Naive thymus-derived CD4-positive, alpha-beta T cell (primary cell): ENCODE measurements at regions of chr16 and their contacts with region 1.

Region 1: GRCh38 chr16:66728117-66728787 is 23.2 kb downstream of the DYNC1LI2 start:
- DNase-seq: peak in 6 of 9 donors; percentile 26 to 56 (median 44)
- ATAC-seq: peak; percentile 92
- H3K4me3 ChIP-seq: no peak overlapping the region
- H3K4me3 Mint-ChIP-seq: no peak overlapping the region
- H3K27ac ChIP-seq: no peak overlapping the region
- H3K27ac Mint-ChIP-seq: peak overlapping the region in 6 of 9 donors; percentile 11 to 86 (median 72)
- H3K4me1 ChIP-seq: no peaks in the 10 kb centered on the region
- H3K4me1 Mint-ChIP-seq: peaks cover 5 to 9% (median 5%) of the 10 kb centered on the region in 7 donors
- H3K27me3 ChIP-seq: no peaks in the 10 kb centered on the region
- H3K27me3 Mint-ChIP-seq: no peaks in the 10 kb centered on the region

Region 2: GRCh38 chr16:66382171-66382965 is 345.9 kb before region 1 on chr16:
- CTCF ChIA-PET with region 1: no interaction called
- POLR2A ChIA-PET with region 1: no interaction called
- intact Hi-C with region 1: no loop called
- DNase-seq: no peak
- ATAC-seq: no peak
- H3K4me3 ChIP-seq: no peak overlapping the region
- H3K4me3 Mint-ChIP-seq: no peak overlapping the region
- H3K27ac ChIP-seq: no peak overlapping the region
- H3K27ac Mint-ChIP-seq: no peak overlapping the region
- H3K4me1 ChIP-seq: no peaks in the 10 kb centered on the region
- H3K4me1 Mint-ChIP-seq: peaks cover 0 to 4% (median 0%) of the 10 kb centered on the region in 7 donors
- H3K27me3 ChIP-seq: no peaks in the 10 kb centered on the region
- H3K27me3 Mint-ChIP-seq: peaks cover 0 to 11% (median 0%) of the 10 kb centered on the region in 5 donors

Region 3: GRCh38 chr16:66562407-66562806 is 165.8 kb before region 1 on chr16:
- CTCF ChIA-PET with region 1: interaction called, 3 read pairs
- POLR2A ChIA-PET with region 1: no interaction called
- intact Hi-C with region 1: loop called in 1 of 2 experiments (anchors 5 kb)
- DNase-seq: peak in 4 of 9 donors; percentile 21 to 53 (median 34)
- ATAC-seq: peak; percentile 60
- H3K4me3 ChIP-seq: no peak overlapping the region
- H3K4me3 Mint-ChIP-seq: no peak overlapping the region
- H3K27ac ChIP-seq: no peak overlapping the region
- H3K27ac Mint-ChIP-seq: peak overlapping the region in 5 of 9 donors; percentile 14 to 71 (median 26)
- H3K4me1 ChIP-seq: peaks cover 22 to 46% of the 10 kb centered on the region in 2 donors
- H3K4me1 Mint-ChIP-seq: peaks cover 31 to 67% (median 41%) of the 10 kb centered on the region in 7 donors
- H3K27me3 ChIP-seq: no peaks in the 10 kb centered on the region
- H3K27me3 Mint-ChIP-seq: no peaks in the 10 kb centered on the region

Region 4: DNA sequence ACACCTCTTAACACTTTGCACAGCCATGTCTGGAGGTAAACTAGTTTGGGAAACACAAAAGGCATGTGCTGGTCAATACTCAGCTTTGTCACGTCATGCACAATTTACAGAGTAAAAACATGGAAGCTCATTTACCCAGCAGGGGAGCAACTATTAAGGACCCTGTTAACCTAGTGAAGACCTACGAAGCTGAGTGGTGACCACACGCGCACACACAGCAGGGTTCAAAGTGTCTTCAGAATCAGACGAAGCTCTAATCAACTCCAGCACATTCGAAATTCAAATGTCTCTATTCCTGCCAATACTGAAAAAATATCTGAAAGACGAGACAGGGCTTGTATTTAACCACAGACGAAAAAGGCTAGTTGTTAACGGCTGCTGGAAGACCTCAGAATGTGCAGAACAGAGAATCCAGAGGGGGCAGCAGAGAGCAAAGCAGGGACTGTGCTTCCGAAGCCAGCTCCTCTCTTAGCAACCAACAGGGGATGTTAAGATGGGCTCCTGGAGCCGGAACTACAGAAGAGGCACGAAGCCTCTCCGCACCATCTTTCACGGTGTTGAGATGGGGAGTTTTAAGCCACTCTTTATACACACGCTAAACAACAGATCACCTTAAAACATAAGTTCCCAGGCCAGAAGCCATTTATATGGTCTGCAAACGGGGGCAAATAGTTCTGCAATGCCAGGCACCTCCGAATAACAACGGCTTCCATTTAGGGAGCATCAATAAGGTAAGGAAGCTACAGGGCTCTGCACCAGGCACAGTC is 77.4 kb before region 1 on chr16:
- CTCF ChIA-PET with region 1: interaction called, 4 read pairs
- POLR2A ChIA-PET with region 1: interaction called, 3 read pairs
- intact Hi-C with region 1: loop called (anchors 1 to 2 kb)
- DNase-seq: peak; percentile 57 to 87 (median 81)
- ATAC-seq: peak; percentile 99
- H3K4me3 ChIP-seq: peak overlapping the region; percentile 44
- H3K4me3 Mint-ChIP-seq: peak overlapping the region; percentile 50 to 86 (median 76)
- H3K27ac ChIP-seq: no peak overlapping the region
- H3K27ac Mint-ChIP-seq: peak overlapping the region in 6 of 9 donors; percentile 41 to 71 (median 62)
- H3K4me1 ChIP-seq: peaks cover 0 to 5% of the 10 kb centered on the region in 2 donors
- H3K4me1 Mint-ChIP-seq: peaks cover 0 to 15% (median 9%) of the 10 kb centered on the region in 7 donors
- H3K27me3 ChIP-seq: no peaks in the 10 kb centered on the region
- H3K27me3 Mint-ChIP-seq: peaks cover 2 to 11% (median 6%) of the 10 kb centered on the region in 5 donors

Region 5: GRCh38 chr16:66696669-66697630 is 31.3 kb before region 1 on chr16 and contains the start of gene CMTM4:
- CTCF ChIA-PET with region 1: interaction called, 5 read pairs
- POLR2A ChIA-PET with region 1: no interaction called
- intact Hi-C with region 1: loop called in 1 of 2 experiments (anchors 2 kb)
- DNase-seq: peak; percentile 56 to 85 (median 72)
- ATAC-seq: peak; percentile 98
- H3K4me3 ChIP-seq: peak within 1 kb of the TSS; percentile 69
- H3K4me3 Mint-ChIP-seq: peak within 1 kb of the TSS; percentile 77 to 91 (median 83)
- H3K27ac ChIP-seq: peak within 1 kb of the TSS; percentile 45
- H3K27ac Mint-ChIP-seq: peak within 1 kb of the TSS in 5 of 9 donors; percentile 36 to 81 (median 47)
- H3K4me1 ChIP-seq: peaks cover 5 to 10% of the 10 kb centered on the region in 2 donors
- H3K4me1 Mint-ChIP-seq: peaks cover 6 to 16% (median 12%) of the 10 kb centered on the region in 7 donors
- H3K27me3 ChIP-seq: no peaks in the 10 kb centered on the region
- H3K27me3 Mint-ChIP-seq: peaks cover 0 to 57% (median 7%) of the 10 kb centered on the region in 5 donors
- total RNA-seq, gene CMTM4: 1.5 to 2.5 (median 1.8) TPM

Region 6: GRCh38 chr16:66740010-66740409 is 11.8 kb after region 1 on chr16:
- CTCF ChIA-PET with region 1: interaction called, 14 read pairs
- POLR2A ChIA-PET with region 1: no interaction called
- intact Hi-C with region 1: no loop called
- DNase-seq: peak in 5 of 9 donors; percentile 4 to 32 (median 25)
- ATAC-seq: peak; percentile 62
- H3K4me3 ChIP-seq: no peak overlapping the region
- H3K4me3 Mint-ChIP-seq: no peak overlapping the region
- H3K27ac ChIP-seq: no peak overlapping the region
- H3K27ac Mint-ChIP-seq: peak overlapping the region in 3 of 9 donors; percentile 1 to 40 (median 15)
- H3K4me1 ChIP-seq: peaks cover 0 to 6% of the 10 kb centered on the region in 2 donors
- H3K4me1 Mint-ChIP-seq: peaks cover 15 to 38% (median 29%) of the 10 kb centered on the region in 7 donors
- H3K27me3 ChIP-seq: no peaks in the 10 kb centered on the region
- H3K27me3 Mint-ChIP-seq: no peaks in the 10 kb centered on the region

Region 7: GRCh38 chr16:66751303-66751991 is 23.2 kb after region 1 on chr16 and contains the start of gene DYNC1LI2:
- CTCF ChIA-PET with region 1: interaction called, 10 read pairs
- POLR2A ChIA-PET with region 1: no interaction called
- intact Hi-C with region 1: loop called in 1 of 2 experiments (anchors 1 kb)
- DNase-seq: peak; percentile 76 to 95 (median 88)
- ATAC-seq: peak; percentile 98
- H3K4me3 ChIP-seq: peak within 1 kb of the TSS; percentile 78
- H3K4me3 Mint-ChIP-seq: peak within 1 kb of the TSS; percentile 76 to 95 (median 90)
- H3K27ac ChIP-seq: peak within 1 kb of the TSS; percentile 91
- H3K27ac Mint-ChIP-seq: peak within 1 kb of the TSS; percentile 73 to 96 (median 88)
- H3K4me1 ChIP-seq: peaks cover 21 to 24% of the 10 kb centered on the region in 2 donors
- H3K4me1 Mint-ChIP-seq: peaks cover 30 to 45% (median 42%) of the 10 kb centered on the region in 7 donors
- H3K27me3 ChIP-seq: no peaks in the 10 kb centered on the region
- H3K27me3 Mint-ChIP-seq: peaks cover 0 to 35% (median 0%) of the 10 kb centered on the region in 5 donors
- total RNA-seq, gene DYNC1LI2: 72.3 to 85.7 (median 80.9) TPM

Region 8: DNA sequence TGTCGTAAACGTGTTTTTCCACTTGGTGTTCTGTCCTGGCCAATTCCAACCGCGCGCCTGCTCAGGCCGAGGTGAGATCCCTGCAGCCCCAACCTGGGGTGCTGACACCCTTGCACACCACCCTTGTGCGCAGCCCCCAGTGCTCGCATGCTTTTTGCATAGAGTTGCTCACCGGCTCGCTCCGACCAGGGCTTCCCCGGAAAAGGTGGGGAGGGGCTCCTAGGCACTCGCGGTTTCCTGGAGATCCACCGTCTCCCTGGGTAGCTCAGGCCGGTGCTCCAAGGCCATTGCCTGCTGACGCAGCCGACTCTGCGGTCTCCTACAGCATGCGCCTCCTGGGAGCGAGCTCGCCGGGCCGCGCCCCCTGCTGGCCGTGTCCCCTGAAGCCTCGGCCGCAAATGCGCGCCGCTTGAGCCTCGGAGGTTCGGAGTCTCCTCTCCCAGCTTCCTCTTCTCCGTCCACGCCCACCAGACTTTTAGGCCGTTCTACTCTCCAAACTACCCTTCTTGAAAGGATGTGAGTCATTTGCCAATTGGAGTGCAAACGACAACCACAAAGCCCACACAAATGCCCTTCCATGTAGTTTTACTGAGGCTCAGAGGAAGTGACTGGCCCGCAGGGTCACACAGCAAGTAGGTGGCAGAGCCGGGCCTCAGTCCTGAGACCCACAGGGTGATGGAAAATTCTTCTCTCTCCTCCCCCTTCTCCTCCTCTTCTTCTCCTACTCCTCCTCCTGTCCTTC is 144.9 kb after region 1 on chr16:
- CTCF ChIA-PET with region 1: interaction called, 4 read pairs
- POLR2A ChIA-PET with region 1: no interaction called
- intact Hi-C with region 1: loop called in 1 of 2 experiments (anchors 2 kb)
- DNase-seq: peak; percentile 62 to 93 (median 77)
- ATAC-seq: peak; percentile 95
- H3K4me3 ChIP-seq: peak overlapping the region; percentile 48
- H3K4me3 Mint-ChIP-seq: peak overlapping the region; percentile 77 to 94 (median 82)
- H3K27ac ChIP-seq: peak overlapping the region; percentile 18
- H3K27ac Mint-ChIP-seq: peak overlapping the region; percentile 7 to 93 (median 60)
- H3K4me1 ChIP-seq: peaks cover 5 to 6% of the 10 kb centered on the region in 2 donors
- H3K4me1 Mint-ChIP-seq: peaks cover 7 to 49% (median 14%) of the 10 kb centered on the region in 7 donors
- H3K27me3 ChIP-seq: no peaks in the 10 kb centered on the region
- H3K27me3 Mint-ChIP-seq: no peaks in the 10 kb centered on the region